CD4-positive, alpha-beta T cell (primary cell): ENCODE measurements at regions of chr17 and their contacts with region 1.

Region 1: DNA sequence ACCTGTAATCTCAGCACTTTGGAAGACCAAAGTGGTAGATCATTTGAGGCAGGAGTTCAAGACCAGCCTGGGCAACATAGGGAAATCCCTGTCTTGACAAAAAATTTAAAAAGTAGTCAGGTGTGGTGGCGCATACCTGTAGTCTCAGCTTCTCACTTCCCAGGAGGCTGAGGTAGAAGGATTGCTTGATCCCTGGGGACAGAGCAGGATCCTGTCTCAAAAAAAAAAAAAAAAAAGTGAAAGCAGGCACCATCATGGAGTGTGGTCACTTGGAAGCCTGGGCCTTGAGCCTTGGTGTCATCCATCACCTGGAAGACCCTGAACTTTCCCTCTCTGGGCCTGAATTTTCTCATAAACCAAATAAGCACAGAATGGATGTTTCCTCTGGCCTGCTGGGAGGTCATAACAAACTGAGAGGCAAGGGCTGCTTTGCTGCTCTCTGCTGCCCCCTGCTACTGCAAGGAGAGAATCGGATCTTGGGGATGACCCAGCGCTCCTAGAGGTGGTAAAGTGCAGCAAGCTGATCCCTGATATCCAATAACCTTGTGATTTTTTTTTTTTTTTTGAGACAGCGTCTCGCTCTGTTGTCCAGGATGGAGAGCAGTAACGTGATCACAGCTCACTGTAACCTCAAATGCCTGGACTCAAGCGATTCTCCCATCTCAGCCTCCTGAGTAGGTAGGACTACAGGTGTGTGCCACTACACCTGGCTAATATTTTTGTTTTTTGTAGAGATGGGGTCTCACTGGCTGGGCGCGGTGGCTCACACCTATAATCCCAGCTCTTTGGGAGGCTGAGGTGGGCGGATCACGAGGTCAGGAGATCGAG is 75.9 kb upstream of the RNU2-1 start:
- DNase-seq: peak in 2 of 14 experiments; percentile 26 to 40
- ATAC-seq: no peak
- H3K4me3 ChIP-seq: no peak overlapping the region
- H3K4me3 Mint-ChIP-seq: no peak overlapping the region
- H3K27ac ChIP-seq: no peak overlapping the region
- H3K27ac Mint-ChIP-seq: no peak overlapping the region
- H3K4me1 ChIP-seq: no peaks in the 10 kb centered on the region
- H3K4me1 Mint-ChIP-seq: no peaks in the 10 kb centered on the region
- H3K27me3 ChIP-seq: no peaks in the 10 kb centered on the region
- H3K27me3 Mint-ChIP-seq: no peaks in the 10 kb centered on the region
- CTCF ChIP-seq: no peak

Region 2: GRCh38 chr17:42779936-42780850 is 529.5 kb before region 1 on chr17 and contains the start of gene WNK4:
- CTCF ChIA-PET with region 1: no interaction called
- POLR2A ChIA-PET with region 1: no interaction called
- intact Hi-C with region 1: no loop called
- DNase-seq: no peak
- ATAC-seq: no peak
- H3K4me3 ChIP-seq: no peak within 1 kb of the TSS
- H3K4me3 Mint-ChIP-seq: no peak within 1 kb of the TSS
- H3K27ac ChIP-seq: no peak within 1 kb of the TSS
- H3K27ac Mint-ChIP-seq: no peak within 1 kb of the TSS
- H3K4me1 ChIP-seq: peaks cover 28% of the 10 kb centered on the region
- H3K4me1 Mint-ChIP-seq: peaks cover 36% of the 10 kb centered on the region
- H3K27me3 ChIP-seq: peaks cover 47 to 51% of the 10 kb centered on the region in 2 experiments
- H3K27me3 Mint-ChIP-seq: peaks cover 47% of the 10 kb centered on the region
- CTCF ChIP-seq: no peak
- total RNA-seq, gene WNK4: 0.42 to 0.74 TPM

Region 3: GRCh38 chr17:43330876-43331639 is 21.3 kb after region 1 on chr17:
- CTCF ChIA-PET with region 1: interaction called, 21 read pairs
- POLR2A ChIA-PET with region 1: interaction called, 4 read pairs
- intact Hi-C with region 1: loop called in 1 of 2 experiments (anchors 1 kb)
- DNase-seq: no peak
- ATAC-seq: no peak
- H3K4me3 ChIP-seq: no peak overlapping the region
- H3K4me3 Mint-ChIP-seq: no peak overlapping the region
- H3K27ac ChIP-seq: no peak overlapping the region
- H3K27ac Mint-ChIP-seq: no peak overlapping the region
- H3K4me1 ChIP-seq: peaks cover 8% of the 10 kb centered on the region
- H3K4me1 Mint-ChIP-seq: peaks cover 7% of the 10 kb centered on the region
- H3K27me3 ChIP-seq: peaks cover 0 to 5% of the 10 kb centered on the region in 2 experiments
- H3K27me3 Mint-ChIP-seq: peaks cover 18% of the 10 kb centered on the region
- CTCF ChIP-seq: no peak

Region 4: GRCh38 chr17:43428524-43428923 is 118.8 kb after region 1 on chr17:
- CTCF ChIA-PET with region 1: no interaction called
- POLR2A ChIA-PET with region 1: no interaction called
- intact Hi-C with region 1: no loop called
- DNase-seq: no peak
- ATAC-seq: no peak
- H3K4me3 ChIP-seq: no peak overlapping the region
- H3K4me3 Mint-ChIP-seq: no peak overlapping the region
- H3K27ac ChIP-seq: no peak overlapping the region
- H3K27ac Mint-ChIP-seq: no peak overlapping the region
- H3K4me1 ChIP-seq: no peaks in the 10 kb centered on the region
- H3K4me1 Mint-ChIP-seq: no peaks in the 10 kb centered on the region
- H3K27me3 ChIP-seq: peaks cover 13 to 15% of the 10 kb centered on the region in 2 experiments
- H3K27me3 Mint-ChIP-seq: peaks cover 50% of the 10 kb centered on the region
- CTCF ChIP-seq: no peak